Activated naive CD4-positive, alpha-beta T cell treated with anti-CD3 and anti-CD28 coated beads for 36 hours (primary cell): ENCODE measurements at regions of chr2 and their contacts with region 1.

Region 1: DNA sequence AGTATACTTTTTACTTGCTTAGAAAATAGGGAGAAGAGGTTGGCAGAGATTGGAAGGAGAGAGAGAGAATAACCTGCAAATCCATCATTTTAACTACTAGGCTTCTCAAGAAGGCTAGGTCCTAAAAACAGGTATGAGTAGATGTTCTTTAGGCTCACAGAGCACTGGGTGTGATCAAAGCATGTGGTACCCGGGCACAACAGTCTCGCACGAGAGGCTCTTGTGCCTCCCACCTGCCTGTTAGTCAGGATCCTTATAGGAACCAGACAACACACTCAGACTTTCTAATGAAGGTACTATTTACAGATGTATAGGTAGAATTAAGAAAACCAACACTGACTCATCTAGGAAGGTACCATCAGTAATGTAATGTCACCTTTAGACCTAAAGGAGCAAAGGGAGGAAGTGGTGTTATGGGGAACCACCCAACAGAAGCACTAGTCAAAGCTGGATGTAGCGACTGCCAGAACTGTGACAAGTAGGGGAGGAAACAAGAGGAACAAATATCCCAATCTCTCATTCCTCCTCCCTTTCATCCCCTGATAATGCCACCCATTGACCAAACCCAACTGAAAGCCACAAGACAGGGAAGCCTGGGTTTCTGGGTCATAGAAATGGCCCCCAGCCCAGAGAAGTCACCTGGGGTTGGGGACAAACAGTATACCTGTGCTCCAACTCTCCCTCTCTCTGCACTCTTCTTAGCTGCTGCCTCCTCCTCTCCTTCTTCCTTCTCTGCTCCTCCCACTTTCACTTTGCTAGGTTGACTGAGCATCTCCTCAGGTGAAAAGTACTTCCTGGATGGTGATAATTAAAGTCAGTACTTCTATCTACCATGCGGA is 16.0 kb upstream of the MARCHF4 start:
- DNase-seq: peak; percentile 70
- H3K4me3 Mint-ChIP-seq: no peak overlapping the region
- H3K27ac Mint-ChIP-seq: peak overlapping the region; percentile 71
- H3K4me1 Mint-ChIP-seq: peaks cover 16% of the 10 kb centered on the region
- H3K27me3 Mint-ChIP-seq: no peaks in the 10 kb centered on the region

Region 2: GRCh38 chr2:215949991-215950404 is 438.3 kb before region 1 on chr2:
- CTCF ChIA-PET with region 1: no interaction called
- intact Hi-C with region 1: no loop called
- DNase-seq: no peak
- H3K4me3 Mint-ChIP-seq: no peak overlapping the region
- H3K27ac Mint-ChIP-seq: no peak overlapping the region
- H3K4me1 Mint-ChIP-seq: no peaks in the 10 kb centered on the region
- H3K27me3 Mint-ChIP-seq: no peaks in the 10 kb centered on the region

Region 3: GRCh38 chr2:216114714-216115557 is 273.3 kb before region 1 on chr2:
- CTCF ChIA-PET with region 1: no interaction called
- intact Hi-C with region 1: loop called (anchors 1 kb)
- DNase-seq: peak; percentile 99
- H3K4me3 Mint-ChIP-seq: peak overlapping the region; percentile 89
- H3K27ac Mint-ChIP-seq: peak overlapping the region; percentile 99
- H3K4me1 Mint-ChIP-seq: peaks cover 91% of the 10 kb centered on the region
- H3K27me3 Mint-ChIP-seq: no peaks in the 10 kb centered on the region

Region 4: DNA sequence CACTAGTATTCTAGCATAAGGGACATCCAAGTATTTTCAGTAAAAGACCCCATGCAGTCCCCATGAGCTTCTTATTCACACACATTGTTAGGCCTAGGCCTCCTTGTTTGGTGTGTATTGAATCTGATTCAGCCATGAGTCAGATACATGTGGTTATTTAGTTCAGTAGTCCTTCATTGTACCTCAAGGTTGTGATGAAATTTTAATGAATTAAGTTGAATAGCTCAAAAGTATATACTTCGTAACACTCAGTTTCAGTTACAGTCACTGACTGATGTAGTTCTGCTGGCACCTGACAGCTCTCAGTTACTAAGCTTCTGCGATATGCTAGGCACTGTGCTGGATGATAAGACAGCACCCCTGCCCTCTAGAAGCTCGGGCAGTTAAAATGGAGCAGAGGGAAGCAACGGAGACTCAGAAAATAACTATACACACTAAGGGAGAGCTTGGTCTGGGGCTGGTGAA is 192.7 kb before region 1 on chr2:
- CTCF ChIA-PET with region 1: no interaction called
- intact Hi-C with region 1: loop called (anchors 1 kb)
- DNase-seq: peak; percentile 61
- H3K4me3 Mint-ChIP-seq: no peak overlapping the region
- H3K27ac Mint-ChIP-seq: peak overlapping the region; percentile 80
- H3K4me1 Mint-ChIP-seq: peaks cover 54% of the 10 kb centered on the region
- H3K27me3 Mint-ChIP-seq: no peaks in the 10 kb centered on the region

Region 5: GRCh38 chr2:216222650-216223352 is 165.5 kb before region 1 on chr2:
- CTCF ChIA-PET with region 1: no interaction called
- intact Hi-C with region 1: loop called (anchors 2 kb)
- DNase-seq: peak; percentile 56
- H3K4me3 Mint-ChIP-seq: no peak overlapping the region
- H3K27ac Mint-ChIP-seq: peak overlapping the region; percentile 41
- H3K4me1 Mint-ChIP-seq: peaks cover 28% of the 10 kb centered on the region
- H3K27me3 Mint-ChIP-seq: no peaks in the 10 kb centered on the region

Region 6: DNA sequence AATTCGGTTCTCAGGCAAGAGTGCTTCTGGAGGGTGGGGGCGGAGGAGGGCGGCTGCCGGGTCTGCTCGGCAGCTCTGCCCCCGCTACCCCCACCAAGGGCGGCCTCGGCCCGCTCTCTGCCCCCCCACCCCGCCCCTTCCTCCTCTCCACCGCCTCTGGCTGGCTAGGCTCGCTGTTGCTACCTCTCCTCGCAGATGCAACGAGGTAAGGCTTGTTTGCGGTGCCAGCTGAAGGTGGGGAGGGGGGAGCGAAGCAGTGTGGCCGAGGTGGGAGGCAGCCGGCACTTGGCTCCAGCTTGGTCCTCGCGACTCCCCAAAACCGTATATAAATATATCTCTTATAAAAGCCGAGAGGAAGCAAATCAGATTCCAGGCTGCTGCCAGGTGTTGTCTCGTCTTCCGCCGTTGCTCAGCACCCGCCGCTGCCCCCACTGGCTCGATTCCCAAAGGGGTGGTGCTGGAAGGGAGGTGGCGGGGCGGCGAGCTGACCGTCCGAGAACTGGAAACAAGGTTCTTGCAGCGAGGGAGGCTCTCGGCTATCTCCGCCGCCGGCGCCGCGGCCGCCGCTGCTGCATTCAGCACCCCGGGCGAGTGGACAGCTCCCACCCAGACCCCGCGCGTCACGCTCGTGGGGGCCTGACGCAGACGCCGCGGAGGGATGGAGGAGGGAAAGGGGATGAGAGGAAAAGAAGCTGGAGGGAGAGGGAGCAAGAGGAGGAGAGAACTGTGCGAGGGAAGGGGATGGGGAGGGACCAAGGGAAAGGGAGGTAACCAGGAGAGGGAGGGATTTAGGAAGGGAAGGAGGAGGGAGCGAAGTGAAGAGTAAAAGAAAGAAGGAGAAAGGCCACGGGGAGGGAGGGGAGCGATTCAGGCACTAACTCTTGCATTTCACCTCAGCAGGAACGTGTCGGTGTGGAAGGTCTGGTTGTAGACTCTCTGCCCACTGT is 16.2 kb before region 1 on chr2 and contains the start of gene MARCHF4:
- CTCF ChIA-PET with region 1: no interaction called
- intact Hi-C with region 1: loop called (anchors 1 kb)
- DNase-seq: peak; percentile 76
- H3K4me3 Mint-ChIP-seq: no peak within 1 kb of the TSS
- H3K27ac Mint-ChIP-seq: no peak within 1 kb of the TSS
- H3K4me1 Mint-ChIP-seq: peaks cover 15% of the 10 kb centered on the region
- H3K27me3 Mint-ChIP-seq: peaks cover 34% of the 10 kb centered on the region
- total RNA-seq, gene MARCHF4: not detected

Region 7: GRCh38 chr2:216412022-216412999 is 24.0 kb after region 1 on chr2 and contains the start of gene SMARCAL1:
- CTCF ChIA-PET with region 1: no interaction called
- intact Hi-C with region 1: loop called (anchors 1 kb)
- DNase-seq: peak; percentile 100
- H3K4me3 Mint-ChIP-seq: peak within 1 kb of the TSS; percentile 92
- H3K27ac Mint-ChIP-seq: peak within 1 kb of the TSS; percentile 90
- H3K4me1 Mint-ChIP-seq: peaks cover 6% of the 10 kb centered on the region
- H3K27me3 Mint-ChIP-seq: no peaks in the 10 kb centered on the region
- total RNA-seq, gene SMARCAL1: 17.0 to 18.2 TPM

Region 8: GRCh38 chr2:216533609-216534008 is 145.3 kb after region 1 on chr2:
- CTCF ChIA-PET with region 1: no interaction called
- intact Hi-C with region 1: no loop called
- DNase-seq: no peak
- H3K4me3 Mint-ChIP-seq: no peak overlapping the region
- H3K27ac Mint-ChIP-seq: no peak overlapping the region
- H3K4me1 Mint-ChIP-seq: peaks cover 5% of the 10 kb centered on the region
- H3K27me3 Mint-ChIP-seq: no peaks in the 10 kb centered on the region

Region 9: DNA sequence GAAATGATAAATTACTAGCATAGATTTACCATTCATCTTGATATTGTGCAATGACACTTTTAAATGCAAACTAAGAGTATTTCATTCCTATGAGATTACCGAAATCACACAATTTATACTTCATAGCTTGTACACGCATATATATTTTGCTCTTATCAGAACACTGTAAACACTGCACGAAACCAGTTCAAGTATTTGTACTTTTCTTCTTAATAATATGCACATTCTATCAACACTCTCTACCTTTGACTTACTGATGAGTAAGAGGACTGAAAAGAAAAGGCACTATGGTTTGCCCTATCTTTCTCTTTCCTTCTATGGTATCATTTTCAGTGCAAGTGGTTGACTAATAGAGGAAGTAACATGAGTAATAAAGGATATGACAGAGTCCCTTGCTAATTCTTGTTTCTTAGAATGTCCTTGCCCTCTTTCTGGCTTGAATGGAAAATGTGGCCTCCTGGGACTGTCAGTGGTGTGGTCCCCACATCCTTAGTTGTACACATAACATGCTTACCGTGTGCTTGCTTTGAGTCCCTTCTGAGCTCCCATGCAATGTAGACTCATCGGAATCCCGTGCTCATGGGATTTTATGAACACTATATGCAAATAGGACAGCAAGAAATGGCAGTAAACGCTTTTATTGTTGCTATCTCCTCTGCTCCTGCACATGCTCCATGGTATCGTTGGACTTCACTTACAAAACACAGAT is 835.1 kb after region 1 on chr2:
- CTCF ChIA-PET with region 1: no interaction called
- intact Hi-C with region 1: loop called (anchors 1 kb)
- DNase-seq: peak; percentile 78
- H3K4me3 Mint-ChIP-seq: no peak overlapping the region
- H3K27ac Mint-ChIP-seq: peak overlapping the region; percentile 59
- H3K4me1 Mint-ChIP-seq: peaks cover 29% of the 10 kb centered on the region
- H3K27me3 Mint-ChIP-seq: peaks cover 28% of the 10 kb centered on the region